Cardiac septum (tissue), 1 donor: ENCODE measurements at regions of chr1 and their contacts with region 1.

Region 1: DNA sequence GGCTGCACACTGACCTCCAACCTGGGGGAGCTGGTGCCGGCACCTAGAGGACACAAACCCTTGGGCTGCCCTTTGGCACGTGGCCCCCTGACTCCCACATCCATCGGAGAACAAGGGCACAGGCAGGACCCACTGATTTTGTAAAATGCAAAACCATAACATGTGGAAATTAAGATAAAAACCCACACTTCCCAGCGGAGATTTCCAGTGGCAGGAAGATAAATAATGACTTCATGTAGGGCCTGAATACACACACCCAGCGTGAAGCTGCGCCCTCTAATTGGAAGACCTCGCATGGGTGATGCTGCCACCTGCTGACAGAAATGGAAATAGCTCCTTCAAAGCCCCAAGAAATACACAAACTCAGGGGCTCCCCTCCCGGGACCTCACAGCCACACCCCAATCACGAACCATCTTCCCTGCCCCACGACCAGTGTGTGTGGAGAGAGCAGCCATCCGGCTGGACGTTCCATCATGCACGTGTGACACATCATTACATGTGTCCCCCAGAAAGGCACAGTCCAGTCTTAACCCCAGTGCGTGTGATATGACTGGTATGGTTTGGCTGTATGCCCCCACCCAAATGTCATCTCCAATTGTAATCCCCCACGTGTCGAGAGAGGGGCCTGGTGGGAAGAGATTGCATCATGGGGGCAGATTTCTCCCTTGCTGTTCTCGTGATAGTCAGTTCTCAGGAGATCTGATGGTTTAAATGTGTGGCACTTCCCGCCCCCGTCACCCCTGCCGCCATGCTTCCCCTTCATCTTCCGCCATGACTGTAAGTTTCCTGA is 5.7 kb upstream of the TPRG1L start:
- DNase-seq: peak; percentile 82

Region 2: GRCh38 chr1:2566101-2567045 is 1052.7 kb before region 1 on chr1:
- intact Hi-C with region 1: no loop called
- DNase-seq: no peak

Region 3: DNA sequence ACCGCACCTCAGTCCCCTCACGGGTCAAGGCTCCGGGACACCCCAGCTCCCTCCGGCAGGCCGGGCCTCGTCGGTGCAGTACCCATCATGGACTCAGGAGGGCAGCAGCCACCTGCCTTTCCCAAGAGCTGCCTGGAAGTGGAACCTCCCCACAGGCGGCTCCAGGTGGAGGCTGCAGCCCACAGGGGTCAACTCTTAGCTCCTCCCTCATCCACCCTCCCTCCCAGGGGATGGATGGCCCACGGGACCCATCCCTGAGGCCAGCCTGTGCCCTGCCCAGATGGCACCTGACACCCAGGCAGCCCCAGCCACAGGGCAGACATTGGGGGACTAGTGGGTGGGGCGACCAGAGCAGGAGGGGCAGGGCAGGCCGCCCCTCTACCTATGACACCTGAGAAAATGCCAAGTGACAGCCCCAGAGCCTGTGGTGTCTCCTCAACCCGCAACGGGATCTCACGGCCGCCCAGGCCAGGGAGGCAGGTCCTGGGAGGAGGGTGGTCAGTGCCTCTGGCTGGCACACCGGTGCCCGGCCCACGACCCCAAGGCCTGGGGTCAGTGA is 165.8 kb before region 1 on chr1:
- intact Hi-C with region 1: loop called (anchors 2 kb)
- DNase-seq: peak; percentile 86

Region 4: DNA sequence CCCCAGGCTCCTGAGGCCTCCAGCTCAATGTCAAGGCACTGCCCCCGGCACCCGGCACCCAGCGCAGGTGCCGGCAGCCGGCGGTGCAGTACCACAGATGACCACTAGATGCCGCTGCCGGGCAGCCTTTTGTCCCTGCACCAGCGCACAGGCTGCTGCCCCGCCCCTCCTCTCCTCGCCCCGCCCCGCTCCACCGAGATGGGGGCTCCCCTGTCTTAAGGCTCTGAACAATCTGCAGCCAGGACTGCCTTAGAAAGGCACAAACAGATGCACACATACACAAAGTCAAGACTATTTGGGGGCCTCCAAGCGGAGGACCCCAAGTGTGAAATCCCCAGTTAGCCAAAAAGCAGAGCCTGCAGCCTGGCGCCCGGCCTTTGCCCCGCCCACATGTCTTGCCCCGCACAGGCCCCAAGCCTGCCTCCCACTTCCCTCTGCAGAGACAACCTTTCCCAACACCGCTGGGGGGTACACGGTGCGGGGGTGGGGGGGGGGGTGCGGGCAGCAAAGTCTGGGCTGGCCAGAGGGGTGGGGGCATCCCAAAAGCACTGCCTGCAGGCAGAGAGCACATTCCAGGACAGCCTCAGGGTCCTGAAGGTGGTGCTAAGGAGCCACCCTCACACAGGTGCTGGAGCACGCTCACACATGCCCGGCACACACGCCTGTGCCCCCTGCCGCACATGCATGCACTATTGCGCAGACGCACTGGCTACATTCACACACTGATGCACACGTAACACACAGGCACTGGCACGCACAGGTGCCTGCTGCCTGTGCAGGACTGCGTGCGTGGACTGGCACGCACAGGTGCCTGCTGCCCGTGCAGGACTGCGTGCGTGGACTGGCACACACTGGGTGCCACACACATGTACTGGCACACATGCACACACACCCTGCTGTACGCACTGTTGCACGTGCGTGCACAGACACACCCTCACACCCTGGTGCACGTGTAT is 127.5 kb before region 1 on chr1:
- intact Hi-C with region 1: loop called (anchors 1 kb)
- DNase-seq: peak; percentile 85

Region 5: DNA sequence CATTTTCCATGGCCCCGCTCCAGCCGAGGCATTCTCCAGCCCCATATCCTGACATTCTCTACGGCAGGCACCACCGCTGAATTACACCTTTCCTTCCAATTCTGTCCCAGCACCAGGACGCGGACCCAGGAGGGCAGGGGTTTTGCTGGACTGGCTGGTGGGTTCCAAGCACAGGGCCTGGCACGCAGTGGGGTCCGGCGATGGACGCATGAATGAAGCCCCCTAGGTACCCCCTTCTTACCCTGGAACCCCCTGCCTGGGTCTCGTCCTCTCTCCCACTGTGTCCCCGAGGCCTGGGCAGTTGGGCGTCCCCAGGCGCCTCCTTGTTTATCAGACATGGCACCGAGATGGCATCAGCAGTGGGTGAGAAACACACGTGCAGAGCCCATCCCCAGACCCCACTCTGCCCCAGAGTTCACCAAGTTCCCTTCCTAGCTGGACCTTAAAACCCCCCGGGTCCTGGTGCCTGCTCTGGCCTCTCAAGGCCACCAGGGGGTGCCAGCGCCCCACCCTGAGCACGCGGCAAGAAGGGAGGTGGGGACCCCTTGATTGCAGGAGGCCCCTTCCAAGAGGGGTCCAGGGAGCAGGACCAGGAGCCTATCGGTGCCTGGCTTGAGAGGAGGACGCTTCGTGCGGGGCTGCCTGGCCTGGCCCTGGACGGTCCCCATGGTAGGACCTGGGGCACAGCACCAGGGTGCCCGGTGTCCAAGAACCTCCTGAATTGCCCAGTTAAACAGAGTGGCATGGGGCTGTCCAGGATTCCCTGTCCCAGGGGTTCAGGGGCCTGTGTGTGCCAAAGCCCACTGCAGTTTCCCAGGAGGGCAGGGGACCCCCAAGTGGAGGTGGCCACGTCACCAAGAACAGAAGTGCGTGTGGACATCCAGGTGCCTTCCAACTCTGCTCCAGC is 53.9 kb before region 1 on chr1:
- intact Hi-C with region 1: loop called (anchors 1 kb)
- DNase-seq: no peak